ENCODE measurements at regions of chr20 and their contacts with region 1.

Region 1: GRCh38 chr20:17682103-17682888 is at the start of gene RRBP1:
- DNase-seq: peak; percentile 98
- H3K4me3 Mint-ChIP-seq: peak within 1 kb of the TSS; percentile 84
- H3K27ac Mint-ChIP-seq: peak within 1 kb of the TSS; percentile 83
- H3K4me1 Mint-ChIP-seq: peaks cover 34% of the 10 kb centered on the region
- H3K27me3 Mint-ChIP-seq: peaks cover 41% of the 10 kb centered on the region
- total RNA-seq, gene RRBP1: 82.3 to 85.7 TPM

Region 2: DNA sequence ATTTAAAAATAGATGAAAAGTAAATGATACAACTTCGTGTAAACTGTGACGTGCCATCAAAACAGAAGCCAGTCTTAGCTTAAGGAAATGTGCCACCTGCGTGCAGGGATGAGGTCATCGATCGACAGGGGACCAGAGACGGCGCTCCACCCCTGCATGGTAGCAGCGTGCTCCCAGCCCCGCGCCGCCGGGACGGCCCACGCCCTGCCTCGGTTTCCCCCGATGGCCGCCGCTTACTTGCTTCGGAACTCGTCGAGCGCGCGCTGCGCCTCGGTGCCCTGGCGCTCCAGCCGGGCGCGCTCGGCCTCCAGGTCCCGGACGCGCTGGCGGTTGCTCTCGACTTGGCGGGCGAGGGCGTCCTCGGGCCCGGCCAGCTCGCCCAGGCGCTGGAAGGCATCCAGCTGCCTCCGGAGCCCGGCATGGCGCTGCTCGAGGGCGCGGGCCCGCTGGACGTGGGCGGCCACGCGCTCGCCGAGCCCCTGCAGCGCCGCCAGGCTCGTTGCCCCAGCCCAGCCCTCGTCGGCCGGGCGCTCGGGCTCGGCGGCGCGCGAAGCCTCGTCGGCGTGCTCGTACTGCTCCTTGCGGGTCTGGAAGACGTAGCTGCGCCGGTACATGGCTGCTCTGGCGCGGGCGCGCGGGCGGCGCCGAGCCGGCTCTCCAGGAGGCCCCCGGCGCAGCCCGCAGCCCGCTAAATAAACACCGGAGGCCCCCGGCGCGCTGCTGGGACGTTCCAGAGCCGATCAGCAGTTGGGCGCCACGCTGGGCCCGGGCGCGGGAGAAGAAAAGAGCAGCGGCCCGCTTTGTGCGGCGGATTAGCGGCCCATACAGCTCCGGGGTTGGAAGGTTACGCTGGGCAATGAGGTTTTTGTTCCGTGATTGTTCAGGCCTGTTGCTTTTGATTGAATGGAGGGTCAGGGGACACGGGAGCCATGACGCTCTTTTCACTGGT is 151.3 kb before region 1 on chr20 and contains the start of gene BFSP1:
- CTCF ChIA-PET with region 1: interaction called, 13 read pairs
- POLR2A ChIA-PET with region 1: interaction called, 19 read pairs
- DNase-seq: peak; percentile 75
- H3K4me3 Mint-ChIP-seq: peak within 1 kb of the TSS; percentile 95
- H3K27ac Mint-ChIP-seq: peak within 1 kb of the TSS; percentile 94
- H3K4me1 Mint-ChIP-seq: peaks cover 33% of the 10 kb centered on the region
- H3K27me3 Mint-ChIP-seq: no peaks in the 10 kb centered on the region
- total RNA-seq, gene BFSP1: 2.7 to 3.2 TPM

Region 3: DNA sequence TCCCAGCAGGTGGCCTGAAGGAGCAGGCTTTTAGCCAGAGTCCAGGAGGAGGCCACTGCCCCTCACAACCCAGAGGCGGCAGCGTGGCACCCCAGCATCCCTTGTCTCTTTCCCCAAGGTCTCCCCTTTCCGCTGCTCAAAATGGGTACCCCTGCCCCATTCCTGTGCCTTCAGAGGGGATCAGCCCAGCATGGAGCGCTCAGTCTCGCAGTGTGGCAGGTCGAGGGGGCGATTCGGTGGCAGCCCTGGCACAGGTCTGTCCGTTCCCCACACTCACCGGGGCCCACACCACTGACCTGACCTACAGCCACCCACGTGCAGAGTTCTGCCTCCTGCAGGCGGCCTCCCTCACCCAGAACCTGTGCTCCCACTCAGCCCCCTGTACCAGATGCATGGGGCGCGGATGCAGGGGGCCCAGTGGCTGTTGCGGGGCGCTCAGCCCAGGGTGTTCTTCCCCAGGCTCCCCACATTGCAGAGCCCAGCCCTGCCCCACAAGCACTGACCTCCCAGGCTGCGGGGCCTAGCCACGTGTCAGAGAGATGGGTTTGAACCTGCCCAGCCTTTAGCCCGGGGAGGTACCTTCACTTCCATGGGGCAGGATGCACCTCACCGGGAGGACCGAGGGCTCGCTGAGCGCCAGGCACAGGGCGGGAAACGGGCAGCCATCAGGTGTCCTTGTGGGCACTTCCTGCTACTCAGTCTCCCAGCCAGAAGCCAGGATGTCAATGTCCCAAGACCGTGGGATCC is 70.6 kb before region 1 on chr20:
- CTCF ChIA-PET with region 1: interaction called, 11 read pairs
- POLR2A ChIA-PET with region 1: interaction called, 17 read pairs
- DNase-seq: peak; percentile 35
- H3K4me3 Mint-ChIP-seq: peak overlapping the region; percentile 48
- H3K27ac Mint-ChIP-seq: peak overlapping the region; percentile 95
- H3K4me1 Mint-ChIP-seq: peaks cover 50% of the 10 kb centered on the region
- H3K27me3 Mint-ChIP-seq: no peaks in the 10 kb centered on the region

Region 4: DNA sequence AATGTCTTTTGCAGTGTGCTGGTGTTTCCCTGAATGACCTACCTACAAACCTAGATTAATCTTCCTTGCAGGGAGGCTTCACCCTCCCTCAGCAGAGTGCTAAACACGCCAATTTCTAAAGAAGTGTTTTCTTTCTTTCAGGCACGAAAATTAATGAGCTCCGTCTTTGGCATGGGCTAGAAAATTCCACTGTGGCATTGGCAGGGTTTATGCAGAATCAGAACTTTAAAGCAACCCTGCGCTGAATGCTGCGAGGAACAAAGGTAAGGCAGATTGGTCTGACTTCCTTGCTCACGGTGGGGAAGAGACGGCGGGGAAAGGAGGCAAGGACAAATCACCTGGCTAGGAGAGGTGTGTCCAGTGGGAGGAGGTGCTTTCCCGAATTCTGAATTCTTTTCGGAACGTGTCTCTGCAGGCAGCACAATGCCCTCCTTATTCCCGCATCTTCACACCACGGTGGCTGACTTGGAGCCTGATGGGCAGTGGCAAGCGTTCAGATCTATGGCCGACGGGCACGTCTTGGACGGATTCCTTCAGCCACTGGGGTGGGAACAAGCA is 11.2 kb after region 1 on chr20:
- CTCF ChIA-PET with region 1: interaction called, 43 read pairs
- POLR2A ChIA-PET with region 1: interaction called, 12 read pairs
- DNase-seq: no peak
- H3K4me3 Mint-ChIP-seq: no peak overlapping the region
- H3K27ac Mint-ChIP-seq: no peak overlapping the region
- H3K4me1 Mint-ChIP-seq: no peaks in the 10 kb centered on the region
- H3K27me3 Mint-ChIP-seq: peaks cover 40% of the 10 kb centered on the region

Region 5: GRCh38 chr20:17898548-17898994 is 216.3 kb after region 1 on chr20:
- CTCF ChIA-PET with region 1: interaction called, 35 read pairs
- POLR2A ChIA-PET with region 1: interaction called, 6 read pairs
- DNase-seq: peak; percentile 75
- H3K4me3 Mint-ChIP-seq: no peak overlapping the region
- H3K27ac Mint-ChIP-seq: no peak overlapping the region
- H3K4me1 Mint-ChIP-seq: peaks cover 40% of the 10 kb centered on the region
- H3K27me3 Mint-ChIP-seq: peaks cover 28% of the 10 kb centered on the region

Region 6: DNA sequence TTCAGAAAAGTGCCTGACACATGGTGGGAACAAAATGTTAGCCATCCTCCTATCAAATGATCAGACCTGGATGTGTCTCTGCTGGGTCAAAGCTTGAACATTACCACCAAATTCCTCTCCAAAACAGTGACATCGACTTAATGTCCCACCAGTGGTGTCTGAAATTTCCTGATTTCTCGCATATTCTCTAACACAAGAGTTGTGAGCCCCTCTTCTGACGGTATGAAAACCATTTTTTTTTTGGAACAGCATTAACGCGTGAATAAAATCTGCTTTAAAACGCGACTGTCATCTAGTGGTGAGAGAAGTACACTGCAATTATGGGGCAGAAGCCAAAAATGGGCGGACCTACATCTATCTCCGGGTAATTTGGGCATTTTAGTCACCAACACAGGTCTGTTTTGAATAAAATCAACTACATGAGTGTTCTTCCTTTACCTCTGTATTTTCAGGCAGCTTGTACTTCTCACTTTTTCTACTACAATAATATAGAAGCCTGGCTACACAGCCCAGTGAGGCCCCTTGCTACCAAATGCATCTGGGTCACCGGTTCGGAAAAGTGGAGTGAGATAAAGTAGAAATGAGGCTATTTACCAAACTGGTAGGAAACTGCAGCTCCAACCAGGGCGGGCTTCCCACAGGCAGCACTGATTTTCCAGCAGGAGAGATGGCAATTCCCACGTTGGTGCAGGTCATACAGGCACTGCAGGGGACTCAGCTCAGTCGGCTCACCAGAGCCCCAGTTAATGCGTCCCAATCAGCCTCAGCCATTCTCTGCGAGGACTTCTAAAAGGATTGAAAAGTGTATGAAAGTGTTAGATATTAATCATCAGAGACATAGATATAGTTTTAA is 313.9 kb after region 1 on chr20:
- CTCF ChIA-PET with region 1: interaction called, 10 read pairs
- POLR2A ChIA-PET with region 1: interaction called, 10 read pairs
- DNase-seq: peak; percentile 48
- H3K4me3 Mint-ChIP-seq: no peak overlapping the region
- H3K27ac Mint-ChIP-seq: no peak overlapping the region
- H3K4me1 Mint-ChIP-seq: peaks cover 47% of the 10 kb centered on the region
- H3K27me3 Mint-ChIP-seq: peaks cover 5% of the 10 kb centered on the region

Measured in activated CD4-positive, alpha-beta memory T cell treated with anti-CD3 and anti-CD28 coated beads, Interleukin-2, amount 10 ng/mL, durations not matched to agents 7 days and 5 days (primary cell).